Lower lobe of right lung (tissue), 2 donors: ENCODE measurements at regions of chr6 and their contacts with region 1.

Region 1: GRCh38 chr6:44096612-44097011 is 30.6 kb downstream of the MRPL14 start:
- DNase-seq: peak; percentile 80
- ATAC-seq: peak; percentile 85 to 86
- H3K4me3 ChIP-seq: no peak overlapping the region
- H3K27ac ChIP-seq: no peak overlapping the region
- H3K4me1 ChIP-seq: peaks cover 9% of the 10 kb centered on the region
- H3K27me3 ChIP-seq: no peaks in the 10 kb centered on the region
- CTCF ChIP-seq: peak; percentile 87

Region 2: GRCh38 chr6:43541774-43542471 is 554.7 kb before region 1 on chr6:
- intact Hi-C with region 1: no loop called
- DNase-seq: no peak
- ATAC-seq: no peak
- H3K4me3 ChIP-seq: no peak overlapping the region
- H3K27ac ChIP-seq: no peak overlapping the region
- H3K4me1 ChIP-seq: no peaks in the 10 kb centered on the region
- H3K27me3 ChIP-seq: no peaks in the 10 kb centered on the region
- CTCF ChIP-seq: no peak

Region 3: GRCh38 chr6:44151348-44152108 is 54.9 kb after region 1 on chr6:
- intact Hi-C with region 1: loop called (anchors 5 kb)
- DNase-seq: peak; percentile 87
- ATAC-seq: peak; percentile 86 to 88
- H3K4me3 ChIP-seq: no peak overlapping the region
- H3K27ac ChIP-seq: no peak overlapping the region
- H3K4me1 ChIP-seq: peaks cover 4% of the 10 kb centered on the region
- H3K27me3 ChIP-seq: no peaks in the 10 kb centered on the region
- CTCF ChIP-seq: peak; percentile 100

Region 4: GRCh38 chr6:44338228-44339122 is 241.9 kb after region 1 on chr6:
- intact Hi-C with region 1: no loop called
- DNase-seq: no peak
- ATAC-seq: peak; percentile 84 to 86
- H3K4me3 ChIP-seq: no peak overlapping the region
- H3K27ac ChIP-seq: no peak overlapping the region
- H3K4me1 ChIP-seq: no peaks in the 10 kb centered on the region
- H3K27me3 ChIP-seq: peaks cover 24% of the 10 kb centered on the region
- CTCF ChIP-seq: peak; percentile 73